Cardiac septum (tissue), 1 donor: ENCODE measurements at regions of chr17 and their contacts with region 1.

Region 1: GRCh38 chr17:12730931-12731521 is 58.3 kb upstream of the ARHGAP44 start:
- DNase-seq: peak; percentile 93

Region 2: GRCh38 chr17:12365805-12366204 is 365.2 kb before region 1 on chr17:
- intact Hi-C with region 1: loop called (anchors 10 kb)
- DNase-seq: peak; percentile 77

Region 3: DNA sequence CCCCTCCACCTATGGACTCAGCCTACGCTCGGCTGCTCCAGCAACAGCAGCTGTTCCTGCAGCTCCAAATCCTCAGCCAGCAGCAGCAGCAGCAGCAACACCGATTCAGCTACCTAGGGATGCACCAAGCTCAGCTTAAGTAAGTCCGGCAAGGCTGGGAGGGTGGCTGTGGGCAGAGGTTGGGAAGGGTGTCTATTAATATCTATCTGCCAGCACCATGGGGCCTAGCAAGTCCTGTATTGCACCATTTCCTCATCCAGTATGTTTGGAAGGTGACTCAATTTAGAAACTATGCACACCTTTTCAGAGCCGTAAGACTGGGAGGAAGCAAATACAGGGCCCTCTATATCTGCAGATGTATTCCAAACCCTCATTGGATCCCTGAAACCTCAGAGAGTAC is 13.3 kb after region 1 on chr17:
- intact Hi-C with region 1: no loop called
- DNase-seq: peak; percentile 84